ENCODE measurements at regions of chr4 and their contacts with region 1.

Region 1: GRCh38 chr4:159266981-159267868 is 164.3 kb downstream of the RAPGEF2 start:
- DNase-seq: peak; percentile 83
- H3K4me3 ChIP-seq: no peak overlapping the region
- H3K27ac ChIP-seq: peak overlapping the region; percentile 31
- H3K4me1 ChIP-seq: peaks cover 42% of the 10 kb centered on the region
- H3K27me3 ChIP-seq: no peaks in the 10 kb centered on the region
- CTCF ChIP-seq: no peak
- POLR2A ChIP-seq: no peak

Region 2: GRCh38 chr4:158895797-158896576 is 371.2 kb before region 1 on chr4:
- CTCF ChIA-PET with region 1: no interaction called
- POLR2A ChIA-PET with region 1: no interaction called
- dilution Hi-C with region 1: no loop called
- intact Hi-C with region 1: no loop called
- DNase-seq: peak; percentile 49
- H3K4me3 ChIP-seq: peak overlapping the region in 1 of 3 experiments; percentile 1
- H3K27ac ChIP-seq: peak overlapping the region; percentile 56
- H3K4me1 ChIP-seq: peaks cover 11% of the 10 kb centered on the region
- H3K27me3 ChIP-seq: no peaks in the 10 kb centered on the region
- CTCF ChIP-seq: peak in 1 of 2 donors; percentile 15
- POLR2A ChIP-seq: no peak

Region 3: GRCh38 chr4:159252491-159252890 is 14.7 kb before region 1 on chr4:
- CTCF ChIA-PET with region 1: interaction called, 12 read pairs
- POLR2A ChIA-PET with region 1: no interaction called
- dilution Hi-C with region 1: no loop called
- intact Hi-C with region 1: loop called (anchors 1 kb)
- DNase-seq: peak; percentile 10
- H3K4me3 ChIP-seq: no peak overlapping the region
- H3K27ac ChIP-seq: no peak overlapping the region
- H3K4me1 ChIP-seq: peaks cover 9% of the 10 kb centered on the region
- H3K27me3 ChIP-seq: no peaks in the 10 kb centered on the region
- CTCF ChIP-seq: no peak
- POLR2A ChIP-seq: no peak

Region 4: DNA sequence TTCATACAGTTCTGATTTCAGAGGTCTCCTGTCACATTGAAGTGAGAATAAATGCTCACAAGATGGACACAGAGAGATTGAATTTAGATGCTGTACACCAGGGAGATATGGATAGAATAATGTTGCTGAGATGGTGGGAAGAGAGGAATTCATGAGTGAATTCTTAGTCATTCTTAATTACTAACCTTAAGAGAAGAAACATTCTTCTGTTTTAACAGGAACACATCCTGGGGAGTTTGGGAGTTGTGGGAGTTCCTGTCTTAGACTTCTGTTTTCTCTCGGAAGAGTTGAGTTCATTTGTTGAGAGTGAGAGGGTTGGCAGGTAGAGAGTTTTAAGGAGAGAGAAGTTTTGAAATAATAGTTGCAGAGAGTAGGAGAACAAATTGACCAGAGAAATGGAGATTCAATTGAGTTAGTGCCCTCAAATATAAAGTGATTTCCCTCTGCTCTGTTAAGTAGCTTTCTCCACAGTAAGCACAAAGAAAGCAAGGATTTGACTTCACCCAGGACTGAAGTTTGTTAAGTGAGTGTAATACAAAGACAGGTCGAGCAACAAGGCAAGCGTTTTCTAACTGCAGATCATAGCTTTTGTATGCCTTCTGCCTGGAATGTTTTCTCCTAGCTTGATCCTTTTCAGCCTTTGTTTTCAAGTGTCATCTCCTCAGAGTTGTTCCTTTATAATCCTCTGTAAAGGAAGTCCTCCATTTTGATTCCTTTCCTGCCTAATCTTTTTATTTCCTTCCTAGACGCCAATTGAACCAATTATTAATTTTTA is 41.5 kb after region 1 on chr4:
- CTCF ChIA-PET with region 1: no interaction called
- POLR2A ChIA-PET with region 1: no interaction called
- dilution Hi-C with region 1: no loop called
- intact Hi-C with region 1: loop called (anchors 2 kb)
- DNase-seq: peak; percentile 54
- H3K4me3 ChIP-seq: no peak overlapping the region
- H3K27ac ChIP-seq: peak overlapping the region; percentile 38
- H3K4me1 ChIP-seq: peaks cover 18% of the 10 kb centered on the region
- H3K27me3 ChIP-seq: no peaks in the 10 kb centered on the region
- CTCF ChIP-seq: no peak
- POLR2A ChIP-seq: no peak

Measured in endothelial cell of umbilical vein (primary cell).